Right cardiac atrium (tissue), 5 donors: ENCODE measurements at regions of chr6 and their contacts with region 1.

Region 1: GRCh38 chr6:31739639-31740396 is at the start of gene MSH5:
- DNase-seq: peak; percentile 98 to 99 (median 99)
- ATAC-seq: peak; percentile 95 to 96
- H3K4me3 ChIP-seq: peak within 1 kb of the TSS; percentile 66
- H3K27ac ChIP-seq: peak within 1 kb of the TSS; percentile 46
- H3K4me1 ChIP-seq: peaks cover 3% of the 10 kb centered on the region
- H3K27me3 ChIP-seq: no peaks in the 10 kb centered on the region
- total RNA-seq, gene MSH5: 2.6 to 3.2 (median 3.0) TPM

Region 2: GRCh38 chr6:31769684-31770371 is 30.0 kb after region 1 on chr6:
- intact Hi-C with region 1: loop called in 1 of 4 experiments (anchors 5 kb)
- DNase-seq: peak; percentile 57 to 86 (median 85)
- ATAC-seq: peak; percentile 14 to 66
- H3K4me3 ChIP-seq: no peak overlapping the region
- H3K27ac ChIP-seq: no peak overlapping the region
- H3K4me1 ChIP-seq: no peaks in the 10 kb centered on the region
- H3K27me3 ChIP-seq: no peaks in the 10 kb centered on the region

Region 3: DNA sequence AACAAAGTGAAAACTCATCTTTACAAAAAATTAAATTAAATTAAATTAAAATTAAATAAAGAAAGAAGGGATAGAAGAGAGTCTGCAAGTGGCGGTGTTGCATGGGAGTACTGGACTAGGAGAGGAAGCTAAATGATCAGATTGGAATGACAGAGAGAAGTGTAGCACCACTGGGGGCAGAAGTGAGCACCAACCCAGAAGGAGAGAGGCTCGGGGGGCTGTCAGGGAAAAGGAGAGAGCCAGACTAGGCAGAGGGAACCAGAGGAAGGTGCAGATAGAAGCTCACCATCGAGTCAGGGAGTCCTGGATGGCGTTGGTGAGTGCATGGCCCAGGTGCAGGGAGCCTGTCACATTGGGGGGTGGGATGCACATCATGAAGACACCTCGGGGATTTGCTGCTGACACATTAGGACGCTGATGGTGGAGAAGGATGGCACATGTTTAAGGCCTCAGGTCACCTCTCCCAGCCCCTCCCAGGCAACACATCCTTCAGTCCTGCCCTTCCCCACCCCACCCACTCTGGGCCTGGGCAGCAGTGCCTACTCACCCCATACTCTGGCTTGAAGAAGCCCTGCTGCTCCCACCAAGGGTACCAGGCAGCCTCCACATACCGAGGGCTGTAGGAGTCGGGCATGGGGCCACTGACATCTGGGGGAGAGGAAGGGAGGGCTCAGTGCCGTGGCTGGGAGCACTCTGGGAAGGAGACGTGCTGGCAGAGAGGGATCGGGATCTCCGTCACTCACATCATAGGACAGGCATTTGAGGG is 51.7 kb after region 1 on chr6:
- intact Hi-C with region 1: loop called in 1 of 4 experiments (anchors 5 kb)
- DNase-seq: peak; percentile 47 to 61 (median 60)
- ATAC-seq: no peak
- H3K4me3 ChIP-seq: no peak overlapping the region
- H3K27ac ChIP-seq: no peak overlapping the region
- H3K4me1 ChIP-seq: no peaks in the 10 kb centered on the region
- H3K27me3 ChIP-seq: no peaks in the 10 kb centered on the region

Region 4: DNA sequence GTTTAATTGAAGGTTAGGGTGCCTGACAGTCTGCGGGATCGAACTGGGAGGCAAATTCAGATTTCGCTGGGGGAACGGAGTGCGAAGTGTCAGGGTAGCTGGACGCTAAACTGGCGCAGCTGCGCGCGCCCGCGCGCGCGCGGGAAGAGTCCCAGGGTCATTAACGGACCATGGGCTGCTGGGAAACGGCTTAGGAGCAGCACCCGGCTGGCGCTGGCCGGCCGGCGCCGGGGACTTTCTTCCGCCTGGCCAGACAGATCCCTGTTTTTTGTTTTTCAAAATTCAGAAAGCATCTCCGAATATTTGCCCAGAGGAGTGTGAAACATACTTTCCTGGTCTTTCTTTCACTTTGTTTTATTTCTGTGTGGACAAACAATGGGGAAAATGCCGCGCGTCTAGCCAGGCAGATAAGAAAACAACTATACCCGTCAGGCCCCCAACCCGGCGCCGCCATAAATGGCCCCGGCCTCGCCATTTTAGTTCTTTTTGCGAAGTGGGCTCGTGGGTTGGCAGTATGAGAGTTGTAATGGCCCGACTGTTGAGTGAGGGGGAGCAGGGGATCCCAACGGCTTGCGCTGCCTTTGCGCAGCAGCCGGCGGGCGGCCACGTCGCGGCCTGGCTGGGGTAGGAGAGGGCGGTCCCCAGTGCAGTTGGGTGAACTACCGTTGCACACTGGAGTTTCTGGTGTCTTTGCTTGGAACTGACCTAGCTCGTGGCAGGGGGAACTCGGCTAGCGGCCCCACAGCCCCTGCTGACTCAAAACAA is 94.8 kb after region 1 on chr6:
- intact Hi-C with region 1: loop called in 1 of 4 experiments (anchors 10 kb)
- DNase-seq: peak; percentile 88 to 96 (median 95)
- ATAC-seq: peak; percentile 93 to 94
- H3K4me3 ChIP-seq: peak overlapping the region; percentile 98
- H3K27ac ChIP-seq: peak overlapping the region; percentile 99
- H3K4me1 ChIP-seq: peaks cover 8% of the 10 kb centered on the region
- H3K27me3 ChIP-seq: no peaks in the 10 kb centered on the region

Region 5: GRCh38 chr6:32148289-32149091 is 408.7 kb after region 1 on chr6:
- intact Hi-C with region 1: no loop called
- DNase-seq: peak; percentile 75 to 89 (median 87)
- ATAC-seq: peak; percentile 62 to 82
- H3K4me3 ChIP-seq: peak overlapping the region; percentile 57
- H3K27ac ChIP-seq: no peak overlapping the region
- H3K4me1 ChIP-seq: no peaks in the 10 kb centered on the region
- H3K27me3 ChIP-seq: no peaks in the 10 kb centered on the region